ENCODE measurements at regions of chr3 and their contacts with region 1.

Region 1: DNA sequence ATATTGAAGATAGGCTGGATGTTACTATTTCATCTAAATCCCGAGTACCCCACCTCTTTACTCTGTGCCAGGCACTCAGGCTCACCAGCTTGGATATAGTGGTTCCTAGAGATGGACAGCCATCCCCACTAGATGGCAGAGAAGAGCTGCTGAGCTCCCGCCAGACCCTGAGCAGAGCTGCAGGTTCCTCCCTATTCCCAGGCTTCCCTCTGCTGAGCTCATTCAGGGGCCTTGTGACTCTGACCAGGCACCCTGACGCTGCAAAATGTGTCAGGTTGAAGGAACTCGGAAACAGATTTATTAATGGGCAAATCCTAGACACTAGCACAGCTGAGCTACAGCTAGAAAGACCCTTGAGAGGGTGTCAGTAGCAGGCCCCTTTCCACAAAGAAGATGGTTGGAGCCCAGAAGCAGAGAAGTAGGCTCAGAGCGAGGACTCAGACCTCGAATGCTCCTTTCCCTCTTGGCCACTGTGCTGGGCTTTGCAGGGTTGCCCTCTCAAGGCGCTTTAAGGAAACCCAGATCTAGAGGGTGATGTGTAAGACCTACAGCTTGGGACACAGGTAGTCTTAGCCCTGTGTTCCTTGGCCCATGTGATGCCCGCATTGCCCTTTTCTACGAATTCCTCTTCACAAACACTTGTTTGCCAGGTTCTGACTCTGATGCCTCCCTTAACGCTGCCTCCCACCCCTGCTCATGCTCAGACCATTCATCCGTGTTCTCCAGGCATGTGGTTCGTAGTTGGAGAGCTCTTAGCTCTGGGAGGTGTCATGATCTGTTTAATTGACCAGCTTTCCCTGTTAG is 38.0 kb upstream of the RHO start:
- DNase-seq: peak; percentile 97
- ATAC-seq: peak; percentile 74
- H3K4me3 ChIP-seq: no peak overlapping the region
- H3K27ac ChIP-seq: peak overlapping the region; percentile 12
- H3K4me1 ChIP-seq: peaks cover 33% of the 10 kb centered on the region
- H3K27me3 ChIP-seq: no peaks in the 10 kb centered on the region
- CTCF ChIP-seq: peak; percentile 96
- POLR2A ChIP-seq: peak; percentile 41; the same call in 1 of the 2 replicates
- RAD21 ChIP-seq: peak; percentile 99

Region 2: DNA sequence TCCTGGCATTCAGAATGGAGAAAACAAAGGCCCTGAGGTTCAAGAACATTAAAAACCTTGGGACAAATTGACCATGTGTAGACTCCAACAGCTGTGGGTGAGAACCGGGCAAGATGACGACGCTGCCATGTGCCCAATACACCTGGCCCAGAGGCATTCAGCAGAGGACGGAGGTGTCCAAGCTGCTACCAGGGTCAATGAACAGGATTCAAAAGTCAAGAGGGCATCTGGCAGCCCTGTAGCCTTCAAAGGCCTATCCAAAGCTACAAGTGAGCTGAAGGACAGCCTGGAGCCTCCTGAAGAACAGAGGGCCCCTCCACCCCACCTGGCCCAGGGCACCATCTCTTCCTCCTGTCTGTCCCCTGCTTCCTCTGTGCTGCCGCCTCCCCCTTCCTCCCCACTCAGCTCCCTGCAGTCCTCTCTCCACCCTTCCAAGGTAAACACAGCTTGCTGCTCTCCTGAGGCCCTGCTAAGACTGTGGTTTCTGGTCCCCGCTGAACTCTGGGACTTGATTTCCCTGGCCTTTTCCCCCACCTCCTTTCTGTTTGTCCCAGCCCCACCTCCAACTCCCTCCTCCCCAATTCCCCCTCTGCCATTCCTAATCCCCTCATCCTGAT is 154.2 kb before region 1 on chr3:
- CTCF ChIA-PET with region 1: no interaction called
- POLR2A ChIA-PET with region 1: no interaction called
- dilution Hi-C with region 1: no loop called
- in situ Hi-C with region 1: no loop called
- intact Hi-C with region 1: no loop called
- DNase-seq: no peak
- ATAC-seq: peak; percentile 32; the same call in 1 of the 2 replicates
- H3K4me3 ChIP-seq: no peak overlapping the region
- H3K27ac ChIP-seq: no peak overlapping the region
- H3K4me1 ChIP-seq: no peaks in the 10 kb centered on the region
- H3K27me3 ChIP-seq: peaks cover 2% of the 10 kb centered on the region; the same call in 1 of the 2 replicates
- CTCF ChIP-seq: no peak
- POLR2A ChIP-seq: no peak
- RAD21 ChIP-seq: no peak

Region 3: DNA sequence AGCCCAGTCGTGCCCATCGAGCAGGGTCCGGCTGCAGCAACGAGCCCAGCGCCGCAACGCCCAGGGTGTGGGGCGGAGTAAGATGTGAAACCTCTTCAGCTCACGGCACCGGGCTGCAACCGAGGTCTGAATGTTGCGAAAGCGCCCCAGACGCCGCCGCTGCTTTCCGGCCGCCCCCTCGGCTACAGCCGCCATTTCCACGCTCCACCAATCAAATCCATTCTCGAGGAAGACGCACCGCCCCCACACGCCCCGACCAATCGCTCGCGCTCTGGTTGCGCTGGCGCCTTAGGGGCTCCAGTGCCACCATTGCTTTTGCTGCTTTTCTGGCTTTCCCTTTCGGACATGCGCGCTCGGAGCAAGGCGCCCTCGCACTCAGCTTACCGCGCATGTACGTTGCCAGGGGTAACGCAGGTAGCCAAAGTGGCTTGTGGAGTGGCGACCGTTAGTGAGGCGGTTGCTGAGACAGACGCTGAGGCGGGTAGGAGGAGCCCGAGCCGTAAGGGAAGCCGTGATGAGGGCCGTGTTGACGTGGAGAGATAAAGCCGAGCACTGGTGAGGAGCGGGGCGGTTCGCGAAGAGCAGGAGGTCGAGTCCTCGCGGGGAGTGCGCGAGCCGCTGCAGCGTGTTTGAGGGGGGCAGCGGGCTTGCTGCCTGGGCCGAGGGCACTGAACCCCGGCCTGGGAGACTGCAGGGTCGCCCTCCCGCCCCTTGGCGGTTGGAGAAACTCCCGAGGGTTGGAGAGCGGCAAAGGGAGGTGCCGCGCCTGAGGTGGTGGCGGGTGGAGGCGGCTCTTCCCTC is 50.4 kb before region 1 on chr3 and contains the starts of genes IFT122 and MBD4:
- CTCF ChIA-PET with region 1: interaction called, 4 read pairs
- POLR2A ChIA-PET with region 1: no interaction called
- dilution Hi-C with region 1: no loop called
- in situ Hi-C with region 1: no loop called
- intact Hi-C with region 1: loop called (anchors 5 kb)
- DNase-seq: peak; percentile 100
- ATAC-seq: peak; percentile 93
- H3K4me3 ChIP-seq: peak within 1 kb of the TSS; percentile 68
- H3K27ac ChIP-seq: peak within 1 kb of the TSS; percentile 82
- H3K4me1 ChIP-seq: peaks cover 4% of the 10 kb centered on the region
- H3K27me3 ChIP-seq: no peaks in the 10 kb centered on the region
- CTCF ChIP-seq: no peak
- POLR2A ChIP-seq: peak; percentile 77
- RAD21 ChIP-seq: no peak
- total RNA-seq, gene IFT122: 27.2 and 28.0 TPM in 2 replicates
- total RNA-seq, gene MBD4: 13.8 and 22.2 TPM in 2 replicates

Region 4: DNA sequence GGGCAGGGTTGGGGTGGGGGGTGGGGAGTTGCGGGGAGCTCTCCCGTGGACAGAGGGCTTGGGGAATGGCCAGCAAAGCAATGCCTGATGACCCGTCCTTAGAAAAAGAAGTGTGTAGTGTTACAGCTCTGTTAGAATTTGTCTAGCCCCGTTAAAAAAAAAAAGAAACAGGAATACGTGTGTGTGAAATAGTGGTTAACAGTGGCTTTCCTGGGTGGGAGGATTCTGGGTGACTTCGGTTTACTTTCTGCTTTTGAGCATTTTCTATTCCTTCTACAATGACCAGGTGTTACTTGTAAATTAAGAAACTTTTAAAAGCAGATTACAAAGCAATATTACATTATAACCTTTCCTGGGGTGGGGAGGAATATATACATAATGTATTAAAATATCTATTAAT is 77.5 kb after region 1 on chr3:
- CTCF ChIA-PET with region 1: no interaction called
- POLR2A ChIA-PET with region 1: no interaction called
- dilution Hi-C with region 1: no loop called
- in situ Hi-C with region 1: no loop called
- intact Hi-C with region 1: no loop called
- DNase-seq: no peak
- ATAC-seq: no peak
- H3K4me3 ChIP-seq: no peak overlapping the region
- H3K27ac ChIP-seq: no peak overlapping the region
- H3K4me1 ChIP-seq: no peaks in the 10 kb centered on the region; the same call in 1 of the 2 replicates
- H3K27me3 ChIP-seq: no peaks in the 10 kb centered on the region
- CTCF ChIP-seq: no peak
- POLR2A ChIP-seq: no peak
- RAD21 ChIP-seq: no peak

Region 5: GRCh38 chr3:129596194-129597086 is 106.0 kb after region 1 on chr3:
- CTCF ChIA-PET with region 1: interaction called, 25 read pairs
- POLR2A ChIA-PET with region 1: no interaction called
- dilution Hi-C with region 1: no loop called
- in situ Hi-C with region 1: loop called (anchors 5 kb)
- intact Hi-C with region 1: no loop called
- DNase-seq: peak; percentile 96
- ATAC-seq: peak; percentile 83
- H3K4me3 ChIP-seq: no peak overlapping the region
- H3K27ac ChIP-seq: peak overlapping the region; percentile 87
- H3K4me1 ChIP-seq: peaks cover 55% of the 10 kb centered on the region
- H3K27me3 ChIP-seq: no peaks in the 10 kb centered on the region
- CTCF ChIP-seq: no peak
- POLR2A ChIP-seq: no peak
- RAD21 ChIP-seq: peak; percentile 39

Region 6: DNA sequence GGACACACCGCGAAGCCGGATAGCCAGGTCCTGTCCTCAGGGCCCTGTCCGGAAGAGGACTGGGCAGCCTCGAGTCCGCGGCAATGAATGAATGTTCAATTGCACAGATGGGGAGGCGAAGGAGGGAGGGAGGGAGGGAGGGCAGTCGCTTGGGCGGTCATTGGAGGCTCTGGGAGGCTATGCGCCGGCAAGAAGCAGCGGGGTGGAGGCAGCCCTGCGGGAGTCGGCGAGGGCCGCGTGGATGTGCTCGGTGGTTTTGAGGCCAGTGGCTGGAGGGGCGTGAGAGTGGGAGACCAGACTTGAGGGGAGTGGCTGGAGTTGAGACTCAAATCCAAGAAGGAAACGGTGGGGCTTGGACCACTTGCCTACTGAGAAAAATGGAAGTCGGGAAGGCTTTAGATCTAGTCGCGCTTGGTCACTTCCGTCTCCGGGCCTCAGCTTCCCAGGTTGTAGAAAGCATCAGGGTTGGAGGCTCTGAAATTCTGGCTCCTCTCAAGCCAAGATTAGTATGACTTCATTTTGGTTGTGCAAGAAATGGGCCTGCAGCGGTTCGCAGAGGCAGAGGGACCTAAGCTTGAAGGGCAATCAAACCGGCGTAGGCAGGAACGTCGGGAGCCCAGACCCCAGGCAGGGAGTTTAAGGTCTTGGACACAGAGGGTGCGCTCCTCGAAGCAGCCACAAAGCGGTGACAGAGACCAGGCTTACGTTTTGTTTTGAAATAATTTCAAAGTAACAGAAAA is 137.2 kb after region 1 on chr3:
- CTCF ChIA-PET with region 1: interaction called, 3 read pairs
- POLR2A ChIA-PET with region 1: no interaction called
- dilution Hi-C with region 1: no loop called
- in situ Hi-C with region 1: no loop called
- intact Hi-C with region 1: loop called (anchors 1 kb)
- DNase-seq: peak; percentile 75
- ATAC-seq: peak; percentile 29
- H3K4me3 ChIP-seq: peak overlapping the region; percentile 29
- H3K27ac ChIP-seq: peak overlapping the region; percentile 88
- H3K4me1 ChIP-seq: peaks cover 20% of the 10 kb centered on the region
- H3K27me3 ChIP-seq: no peaks in the 10 kb centered on the region
- CTCF ChIP-seq: peak; percentile 74
- POLR2A ChIP-seq: peak; percentile 46
- RAD21 ChIP-seq: peak; percentile 89

Region 7: GRCh38 chr3:129824926-129825541 is 334.6 kb after region 1 on chr3:
- CTCF ChIA-PET with region 1: interaction called, 5 read pairs
- POLR2A ChIA-PET with region 1: no interaction called
- dilution Hi-C with region 1: no loop called
- in situ Hi-C with region 1: loop called (anchors 5 kb)
- intact Hi-C with region 1: loop called (anchors 1 kb)
- DNase-seq: peak; percentile 58
- ATAC-seq: no peak
- H3K4me3 ChIP-seq: no peak overlapping the region
- H3K27ac ChIP-seq: no peak overlapping the region
- H3K4me1 ChIP-seq: peaks cover 2% of the 10 kb centered on the region; the same call in 1 of the 2 replicates
- H3K27me3 ChIP-seq: no peaks in the 10 kb centered on the region
- CTCF ChIP-seq: peak; percentile 64
- POLR2A ChIP-seq: no peak
- RAD21 ChIP-seq: peak; percentile 81

Region 8: DNA sequence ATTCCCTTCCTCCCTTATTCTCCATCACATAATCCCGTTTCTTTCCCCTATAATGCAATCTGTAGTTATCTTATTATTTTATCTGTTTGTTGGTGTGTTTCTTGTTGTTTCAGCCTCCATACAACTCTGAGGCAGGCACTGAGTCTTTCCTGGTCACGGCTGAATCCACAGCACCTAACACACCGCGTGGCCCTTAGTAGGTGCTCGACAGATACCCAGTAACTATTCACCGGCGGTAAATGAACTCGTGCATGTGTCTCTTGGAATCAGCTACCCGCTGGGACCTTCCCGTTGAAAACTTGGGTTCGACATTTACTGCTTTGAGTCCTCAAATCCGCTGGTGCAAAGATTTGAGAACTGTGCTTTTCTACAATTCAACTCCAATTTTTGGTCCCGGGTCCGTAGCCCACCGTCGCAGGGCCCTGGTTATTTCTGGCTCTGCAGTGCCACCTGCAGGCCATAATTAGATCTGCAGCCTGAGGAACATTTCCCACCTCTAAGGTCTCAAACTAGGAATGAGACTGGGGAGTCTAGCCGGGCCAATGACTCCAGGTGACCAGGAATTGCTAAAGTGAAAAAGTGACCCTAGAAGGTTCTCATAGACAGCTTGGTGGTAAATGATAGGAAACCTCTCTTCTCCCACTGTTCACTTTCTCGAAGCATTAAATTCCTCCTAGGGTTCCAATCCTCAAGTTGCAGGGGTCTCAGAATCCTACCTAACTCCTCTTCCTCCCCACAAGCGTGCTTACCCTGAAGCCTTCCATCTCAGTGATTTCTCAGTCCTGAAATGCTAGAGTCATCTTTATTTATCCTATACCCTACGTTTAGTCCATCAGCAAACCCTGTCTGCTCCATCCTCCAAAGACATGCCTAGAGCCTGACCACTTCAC is 444.0 kb after region 1 on chr3:
- CTCF ChIA-PET with region 1: no interaction called
- POLR2A ChIA-PET with region 1: no interaction called
- dilution Hi-C with region 1: no loop called
- in situ Hi-C with region 1: loop called (anchors 5 kb)
- intact Hi-C with region 1: loop called (anchors 1 kb)
- DNase-seq: peak; percentile 16
- ATAC-seq: peak; percentile 89
- H3K4me3 ChIP-seq: no peak overlapping the region; the same call in 1 of the 2 replicates
- H3K27ac ChIP-seq: no peak overlapping the region
- H3K4me1 ChIP-seq: 0 out of 2 replicates have a peak, but pooled peaks cover 2% of the 10 kb centered on the region
- H3K27me3 ChIP-seq: peaks cover 21% of the 10 kb centered on the region
- CTCF ChIP-seq: peak; percentile 83
- POLR2A ChIP-seq: no peak
- RAD21 ChIP-seq: peak; percentile 77

Measured in IMR-90 (cell line).